ENCODE measurements at regions of chr1 and their contacts with region 1.

Region 1: DNA sequence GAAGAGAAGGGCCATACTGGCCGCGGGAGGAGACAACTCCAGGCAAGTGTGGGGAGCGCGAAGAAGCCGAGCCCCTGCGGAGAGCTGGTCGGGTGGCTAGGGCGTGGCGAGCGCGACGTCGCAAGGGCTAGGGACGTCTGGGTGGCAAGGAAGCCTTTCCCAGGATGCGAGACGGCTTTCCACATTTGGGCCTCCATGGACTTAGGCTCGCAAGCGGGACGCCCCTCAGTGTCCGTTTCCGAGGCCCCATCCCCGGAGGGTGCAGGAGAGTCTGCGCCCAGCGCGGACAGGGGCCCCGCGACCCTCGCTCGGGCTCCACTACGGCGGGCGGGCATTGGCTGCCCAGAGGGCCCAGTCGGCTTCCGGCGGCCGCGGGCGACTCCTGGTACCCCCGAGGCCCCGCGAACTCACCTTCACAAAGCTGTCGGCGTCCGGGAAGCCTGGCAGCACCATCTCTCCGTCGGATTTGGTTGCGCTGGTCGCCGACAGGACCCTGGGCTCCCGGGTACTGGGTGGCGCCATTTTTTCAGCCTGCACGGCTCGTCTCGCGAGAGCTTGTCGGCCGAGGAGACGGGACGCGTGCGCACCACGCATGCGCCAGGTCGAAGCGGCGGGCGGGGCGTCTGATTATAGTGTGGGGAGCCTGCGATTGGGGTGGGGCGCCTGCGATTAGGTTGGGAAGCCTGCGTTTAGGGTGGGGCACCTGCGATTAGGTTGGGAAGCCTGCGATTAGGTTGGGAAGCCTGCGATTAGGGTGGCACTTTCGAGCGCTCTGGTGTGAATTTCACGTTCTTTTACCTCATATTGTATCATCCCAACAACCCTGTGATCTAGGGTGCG is at the start of gene EXOSC10:
- DNase-seq: peak; percentile 66 to 91
- H3K4me3 ChIP-seq: peak within 1 kb of the TSS; percentile 86
- H3K27ac ChIP-seq: peak within 1 kb of the TSS; percentile 63
- H3K4me1 ChIP-seq: peaks cover 5% of the 10 kb centered on the region; the same call in 1 of the 2 replicates
- H3K27me3 ChIP-seq: no peaks in the 10 kb centered on the region
- CTCF ChIP-seq: no peak
- total RNA-seq, gene EXOSC10: 55.8 and 57.7 TPM in 2 replicates

Region 2: DNA sequence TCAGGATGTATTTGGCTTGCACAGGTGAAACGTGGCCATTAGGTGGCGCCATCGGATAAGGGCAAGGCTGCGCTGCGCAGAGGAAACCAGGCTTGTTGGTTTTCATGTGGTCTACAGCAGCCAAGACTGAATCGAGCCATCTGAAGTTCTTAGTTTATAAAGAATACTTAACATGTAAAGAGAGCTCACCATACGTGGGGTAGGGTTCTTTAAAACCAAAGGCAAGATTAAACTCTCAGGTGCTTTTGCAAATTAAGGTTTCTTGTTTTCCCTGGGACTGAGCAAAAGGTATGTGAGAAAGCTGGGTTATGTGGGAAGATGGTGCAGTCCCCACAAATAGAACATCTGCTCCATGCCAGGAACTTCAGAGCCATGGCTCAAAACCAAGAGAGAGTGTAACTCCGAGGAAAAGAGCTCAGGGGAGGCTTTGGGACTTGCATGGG is 61.8 kb before region 1 on chr1:
- CTCF ChIA-PET with region 1: no interaction called
- POLR2A ChIA-PET with region 1: interaction called, 12 read pairs
- intact Hi-C with region 1: no loop called
- DNase-seq: peak; percentile 45 to 75
- H3K4me3 ChIP-seq: no peak overlapping the region
- H3K27ac ChIP-seq: no peak overlapping the region
- H3K4me1 ChIP-seq: no peaks in the 10 kb centered on the region
- H3K27me3 ChIP-seq: no peaks in the 10 kb centered on the region
- CTCF ChIP-seq: peak; percentile 89